ENCODE measurements at regions of chr3 and their contacts with region 1.

Region 1: GRCh38 chr3:129026728-129027543 is 25.8 kb downstream of the EFCC1 start:
- DNase-seq: peak; percentile 91 to 95 (median 94)
- H3K4me3 ChIP-seq: peak overlapping the region; percentile 42 to 57
- H3K4me3 Mint-ChIP-seq: peak overlapping the region; percentile 76 to 88 (median 85)
- H3K27ac ChIP-seq: peak overlapping the region; percentile 55
- H3K27ac Mint-ChIP-seq: peak overlapping the region; percentile 91 to 97 (median 97)
- H3K4me1 ChIP-seq: peaks cover 16% of the 10 kb centered on the region
- H3K4me1 Mint-ChIP-seq: peaks cover 10 to 25% (median 16%) of the 10 kb centered on the region in 4 donors
- H3K27me3 ChIP-seq: no peaks in the 10 kb centered on the region
- H3K27me3 Mint-ChIP-seq: no peaks in the 10 kb centered on the region

Region 2: GRCh38 chr3:127417709-127418559 is 1609.0 kb before region 1 on chr3:
- CTCF ChIA-PET with region 1: no interaction called
- POLR2A ChIA-PET with region 1: no interaction called
- intact Hi-C with region 1: no loop called
- DNase-seq: no peak
- H3K4me3 ChIP-seq: no peak overlapping the region
- H3K4me3 Mint-ChIP-seq: peak overlapping the region in 1 of 8 donors; percentile 0
- H3K27ac ChIP-seq: no peak overlapping the region
- H3K27ac Mint-ChIP-seq: no peak overlapping the region
- H3K4me1 ChIP-seq: no peaks in the 10 kb centered on the region
- H3K4me1 Mint-ChIP-seq: no peaks in the 10 kb centered on the region
- H3K27me3 ChIP-seq: peaks cover 6% of the 10 kb centered on the region
- H3K27me3 Mint-ChIP-seq: peaks cover 32 to 34% of the 10 kb centered on the region in 2 donors

Region 3: DNA sequence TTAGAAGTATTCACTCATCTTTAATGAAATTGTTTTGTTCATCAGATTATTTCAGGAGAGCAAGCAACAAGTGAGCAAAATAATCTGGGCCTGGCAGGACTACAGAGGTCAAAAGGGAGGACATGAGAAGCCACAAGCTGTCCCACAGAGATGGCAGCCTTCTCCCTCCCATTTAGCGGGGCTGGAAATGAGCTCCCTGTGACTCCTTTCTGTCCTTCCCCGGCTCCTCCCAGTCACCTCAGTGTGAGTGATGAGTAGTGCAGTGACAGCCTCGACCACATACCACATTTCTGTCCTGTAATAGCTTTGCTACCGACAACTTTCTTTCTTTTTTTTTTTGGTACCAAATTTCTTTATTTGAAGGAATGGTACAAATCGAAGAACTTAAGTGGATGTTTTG is 263.0 kb before region 1 on chr3:
- CTCF ChIA-PET with region 1: no interaction called
- POLR2A ChIA-PET with region 1: no interaction called
- intact Hi-C with region 1: no loop called
- DNase-seq: no peak
- H3K4me3 ChIP-seq: no peak overlapping the region
- H3K4me3 Mint-ChIP-seq: peak overlapping the region in 1 of 8 donors; percentile 26
- H3K27ac ChIP-seq: no peak overlapping the region
- H3K27ac Mint-ChIP-seq: peak overlapping the region in 4 of 7 donors; percentile 7 to 67 (median 22)
- H3K4me1 ChIP-seq: peaks cover 50% of the 10 kb centered on the region
- H3K4me1 Mint-ChIP-seq: peaks cover 59 to 91% (median 76%) of the 10 kb centered on the region in 4 donors
- H3K27me3 ChIP-seq: no peaks in the 10 kb centered on the region
- H3K27me3 Mint-ChIP-seq: no peaks in the 10 kb centered on the region

Region 4: GRCh38 chr3:128993461-128994173 is 33.3 kb before region 1 on chr3 and contains the start of gene CFAP92:
- CTCF ChIA-PET with region 1: interaction called, 16 read pairs
- POLR2A ChIA-PET with region 1: interaction called, 11 read pairs
- intact Hi-C with region 1: no loop called
- DNase-seq: peak; percentile 89 to 92 (median 91)
- H3K4me3 ChIP-seq: peak within 1 kb of the TSS in 1 of 2 donors; percentile 42
- H3K4me3 Mint-ChIP-seq: peak within 1 kb of the TSS; percentile 68 to 85 (median 78)
- H3K27ac ChIP-seq: peak within 1 kb of the TSS; percentile 40
- H3K27ac Mint-ChIP-seq: peak within 1 kb of the TSS; percentile 30 to 91 (median 83)
- H3K4me1 ChIP-seq: peaks cover 14% of the 10 kb centered on the region
- H3K4me1 Mint-ChIP-seq: peaks cover 5 to 28% (median 16%) of the 10 kb centered on the region in 4 donors
- H3K27me3 ChIP-seq: no peaks in the 10 kb centered on the region
- H3K27me3 Mint-ChIP-seq: no peaks in the 10 kb centered on the region
- total RNA-seq, gene CFAP92: 0.38 TPM in 1 of 2 experiments, not detected in the other

Region 5: DNA sequence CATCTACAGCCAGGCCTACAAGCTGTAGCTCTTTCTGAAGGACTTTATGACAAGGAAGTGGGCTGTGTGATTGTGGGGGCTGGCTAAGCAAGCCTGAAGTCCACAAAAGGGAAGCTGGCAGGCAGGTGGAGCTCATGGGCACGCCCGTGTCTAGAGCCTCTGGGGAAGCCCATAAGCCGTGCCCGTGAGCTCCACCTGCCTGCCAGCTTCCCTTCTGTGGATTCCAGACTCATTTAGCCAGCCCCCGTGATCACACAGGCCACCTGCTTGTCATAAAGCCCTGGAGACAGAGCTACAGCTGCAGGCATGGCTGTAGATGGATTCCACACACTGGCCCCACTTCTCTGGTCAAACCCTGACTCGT is 10.6 kb before region 1 on chr3:
- CTCF ChIA-PET with region 1: interaction called, 123 read pairs
- POLR2A ChIA-PET with region 1: interaction called, 150 read pairs
- intact Hi-C with region 1: loop called (anchors 1 kb)
- DNase-seq: peak; percentile 54 to 74 (median 59)
- H3K4me3 ChIP-seq: peak overlapping the region; percentile 41 to 54
- H3K4me3 Mint-ChIP-seq: peak overlapping the region; percentile 54 to 89 (median 83)
- H3K27ac ChIP-seq: peak overlapping the region; percentile 64
- H3K27ac Mint-ChIP-seq: peak overlapping the region; percentile 85 to 99 (median 94)
- H3K4me1 ChIP-seq: peaks cover 36% of the 10 kb centered on the region
- H3K4me1 Mint-ChIP-seq: peaks cover 32 to 54% (median 44%) of the 10 kb centered on the region in 4 donors
- H3K27me3 ChIP-seq: no peaks in the 10 kb centered on the region
- H3K27me3 Mint-ChIP-seq: no peaks in the 10 kb centered on the region

Region 6: DNA sequence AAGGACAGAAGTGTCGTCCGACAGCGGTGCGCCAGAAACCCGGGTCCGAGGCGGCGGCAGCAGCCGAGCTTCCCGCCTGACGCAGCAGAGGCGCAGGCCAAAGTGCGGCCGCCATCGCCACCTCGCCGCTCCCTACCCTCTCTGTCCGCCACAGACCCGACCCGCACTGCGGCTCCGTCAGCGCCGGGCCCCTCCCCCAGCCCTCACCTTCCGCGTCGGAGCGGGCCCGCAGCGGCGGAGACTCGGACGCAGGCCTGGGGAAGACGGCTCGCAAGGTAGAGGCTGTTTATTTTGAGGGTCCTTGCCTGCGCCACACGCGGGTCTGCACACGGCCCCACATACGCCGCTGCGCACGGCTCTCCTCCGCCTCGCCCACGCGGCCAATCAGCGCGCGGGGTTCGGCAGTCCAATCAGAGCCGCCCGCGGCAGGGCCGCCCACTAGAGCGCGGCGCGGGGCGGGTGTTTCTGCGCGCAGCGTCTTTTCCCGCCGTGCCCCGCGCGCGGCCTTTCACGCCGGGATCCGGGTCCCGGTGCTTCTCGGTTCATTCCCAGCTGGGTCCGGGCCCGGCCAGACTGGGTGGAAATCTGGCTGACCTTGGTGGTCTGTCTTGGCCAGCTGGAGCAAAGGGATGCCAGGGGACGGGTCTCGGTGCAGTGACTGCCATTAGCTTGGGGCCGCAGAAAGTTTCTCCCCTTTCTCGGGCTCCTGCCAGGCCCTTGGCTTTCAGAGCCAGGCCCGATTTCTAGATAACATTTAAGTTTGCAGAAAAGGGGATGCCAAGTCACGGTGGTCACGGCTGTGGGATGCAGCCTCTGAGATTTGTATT is 156.8 kb after region 1 on chr3 and contains the start of gene CNBP:
- CTCF ChIA-PET with region 1: interaction called, 3 read pairs
- POLR2A ChIA-PET with region 1: interaction called, 20 read pairs
- intact Hi-C with region 1: loop called (anchors 1 kb)
- DNase-seq: peak; percentile 90 to 95 (median 93)
- H3K4me3 ChIP-seq: peak within 1 kb of the TSS; percentile 51 to 93
- H3K4me3 Mint-ChIP-seq: peak within 1 kb of the TSS; percentile 89 to 99 (median 97)
- H3K27ac ChIP-seq: peak within 1 kb of the TSS; percentile 99
- H3K27ac Mint-ChIP-seq: peak within 1 kb of the TSS; percentile 91 to 99 (median 98)
- H3K4me1 ChIP-seq: peaks cover 41% of the 10 kb centered on the region
- H3K4me1 Mint-ChIP-seq: peaks cover 20 to 55% (median 31%) of the 10 kb centered on the region in 4 donors
- H3K27me3 ChIP-seq: no peaks in the 10 kb centered on the region
- H3K27me3 Mint-ChIP-seq: no peaks in the 10 kb centered on the region
- total RNA-seq, gene CNBP: 369 to 400 TPM

Region 7: DNA sequence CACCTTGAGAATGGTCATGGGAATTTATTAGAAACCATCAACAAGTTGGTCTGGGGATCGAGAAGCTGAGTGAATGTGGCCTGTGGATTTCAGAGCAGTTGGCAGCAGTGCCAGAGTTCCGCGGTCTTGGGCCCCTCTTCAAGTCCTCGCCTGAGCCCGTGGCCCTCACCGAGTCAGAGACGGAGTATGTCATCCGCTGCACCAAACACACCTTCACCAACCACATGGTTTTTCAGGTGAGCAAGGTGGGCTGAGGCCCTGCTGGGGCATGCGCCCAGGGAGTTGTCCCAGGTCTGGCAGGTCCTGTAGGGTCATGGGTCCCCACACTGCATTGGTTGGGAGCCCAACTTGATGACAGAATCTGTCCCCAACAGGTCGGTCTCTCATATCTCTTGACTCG is 244.7 kb after region 1 on chr3:
- CTCF ChIA-PET with region 1: no interaction called
- POLR2A ChIA-PET with region 1: no interaction called
- intact Hi-C with region 1: no loop called
- DNase-seq: no peak
- H3K4me3 ChIP-seq: no peak overlapping the region
- H3K4me3 Mint-ChIP-seq: no peak overlapping the region
- H3K27ac ChIP-seq: no peak overlapping the region
- H3K27ac Mint-ChIP-seq: peak overlapping the region in 2 of 7 donors; percentile 15 to 57
- H3K4me1 ChIP-seq: no peaks in the 10 kb centered on the region
- H3K4me1 Mint-ChIP-seq: peaks cover 0 to 1% (median 0%) of the 10 kb centered on the region in 4 donors
- H3K27me3 ChIP-seq: no peaks in the 10 kb centered on the region
- H3K27me3 Mint-ChIP-seq: no peaks in the 10 kb centered on the region